Common myeloid progenitor, CD34-positive (primary cell): ENCODE measurements at regions of chr15 and their contacts with region 1.

Region 1: DNA sequence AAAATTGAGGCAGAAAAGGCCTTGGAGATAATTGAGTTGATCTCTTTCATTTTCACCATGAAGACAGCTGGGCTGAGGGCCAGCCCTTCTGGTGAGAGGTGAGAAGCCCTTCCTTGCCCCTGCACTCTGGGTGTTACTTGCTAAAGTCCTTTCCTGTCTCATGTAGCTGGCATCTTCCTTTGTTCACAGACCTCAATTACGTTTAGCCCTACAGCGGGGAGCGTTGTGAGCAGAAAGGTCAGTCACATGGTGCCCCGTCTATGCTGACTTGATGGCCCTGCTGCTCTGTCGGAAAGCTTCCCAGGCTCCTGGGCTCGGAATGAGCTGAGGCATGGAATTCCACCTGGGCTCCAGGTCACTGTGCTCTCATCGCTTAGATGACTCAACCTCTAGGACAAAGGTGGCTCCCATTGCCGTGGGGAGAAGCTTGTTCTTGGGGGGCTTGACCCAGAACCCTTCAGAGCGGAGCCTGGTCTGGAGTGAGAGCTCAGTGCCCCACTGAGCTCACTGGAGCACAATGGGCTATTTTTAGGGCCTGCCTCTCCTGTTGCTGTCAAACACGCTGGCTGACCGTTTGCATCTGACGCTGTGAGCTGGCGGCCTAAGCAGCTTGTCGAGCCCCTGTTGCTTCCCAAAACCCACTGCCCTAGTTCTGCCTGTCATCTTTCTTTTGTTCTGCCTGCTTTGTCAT is 47.0 kb downstream of the RPLP1 start:
- DNase-seq: peak in 2 of 3 donors; percentile 33 to 40
- H3K4me3 ChIP-seq: no peak overlapping the region
- H3K27ac ChIP-seq: no peak overlapping the region
- H3K4me1 ChIP-seq: peaks cover 0 to 11% (median 4%) of the 10 kb centered on the region in 4 experiments
- H3K27me3 ChIP-seq: peaks cover 0 to 4% (median 0%) of the 10 kb centered on the region in 5 experiments

Region 2: GRCh38 chr15:69475769-69476358 is 23.8 kb before region 1 on chr15:
- CTCF ChIA-PET with region 1: interaction called, 10 read pairs
- POLR2A ChIA-PET with region 1: no interaction called
- DNase-seq: peak; percentile 58 to 77 (median 69)
- H3K4me3 ChIP-seq: no peak overlapping the region
- H3K27ac ChIP-seq: no peak overlapping the region
- H3K4me1 ChIP-seq: peaks cover 0 to 15% (median 8%) of the 10 kb centered on the region in 4 experiments
- H3K27me3 ChIP-seq: peaks cover 0 to 2% (median 0%) of the 10 kb centered on the region in 5 experiments